ENCODE measurements at regions of chr6 and their contacts with region 1.

Region 1: GRCh38 chr6:33579828-33580714 is at the start of gene BAK1:
- DNase-seq: peak; percentile 91
- H3K4me3 ChIP-seq: peak within 1 kb of the TSS; percentile 78 to 93 (median 83)
- H3K27ac ChIP-seq: peak within 1 kb of the TSS; percentile 70
- H3K4me1 ChIP-seq: peaks cover 17% of the 10 kb centered on the region
- H3K27me3 ChIP-seq: no peaks in the 10 kb centered on the region
- CTCF ChIP-seq: peak; percentile 28 to 63
- POLR2A ChIP-seq: peak; percentile 84
- total RNA-seq, gene BAK1: 25.4 and 27.5 TPM in 2 replicates

Region 2: DNA sequence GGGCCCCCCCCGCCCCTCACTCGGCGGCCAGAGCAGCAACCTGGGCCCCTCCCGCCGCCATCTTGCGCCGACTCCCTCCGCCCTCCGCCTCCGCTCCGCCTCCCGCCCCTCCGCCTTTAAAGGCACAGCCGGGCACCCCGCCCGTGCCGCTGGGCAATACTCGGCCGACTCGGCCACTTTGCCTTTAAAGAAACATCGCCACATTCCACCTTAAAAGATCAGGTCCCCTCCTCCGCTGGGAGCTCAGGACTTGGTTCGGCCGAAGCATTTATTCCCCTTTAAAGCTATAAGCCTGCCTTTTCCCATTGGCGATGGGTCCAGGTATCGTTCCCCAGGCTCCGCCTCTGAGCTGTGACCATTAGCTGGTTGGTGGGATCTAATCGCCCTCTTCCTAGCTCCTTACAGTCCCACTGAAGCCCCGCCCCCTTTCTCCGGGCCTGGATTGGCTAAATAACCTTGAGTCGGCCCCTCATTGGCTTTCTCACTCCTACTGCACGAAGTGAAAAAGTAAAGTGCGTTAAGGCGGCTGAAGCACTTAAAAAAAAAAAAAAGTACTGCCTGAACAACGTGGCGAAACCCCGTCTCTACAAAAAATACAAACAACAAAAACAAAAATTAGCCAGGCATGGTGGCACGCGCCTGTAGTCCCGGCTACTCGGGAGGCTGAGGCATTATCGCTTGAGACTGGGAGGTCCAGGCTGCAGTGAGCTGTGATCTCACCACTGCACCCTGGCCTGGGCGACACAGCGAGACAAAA is 262.2 kb before region 1 on chr6 and contains the start of gene ZBTB22:
- CTCF ChIA-PET with region 1: no interaction called
- POLR2A ChIA-PET with region 1: no interaction called
- dilution Hi-C with region 1: no loop called
- intact Hi-C with region 1: loop called (anchors 10 kb)
- DNase-seq: peak; percentile 99
- H3K4me3 ChIP-seq: peak within 1 kb of the TSS; percentile 60 to 87 (median 87)
- H3K27ac ChIP-seq: peak within 1 kb of the TSS; percentile 71
- H3K4me1 ChIP-seq: peaks cover 55% of the 10 kb centered on the region
- H3K27me3 ChIP-seq: no peaks in the 10 kb centered on the region
- CTCF ChIP-seq: no peak
- POLR2A ChIP-seq: no peak
- total RNA-seq, gene ZBTB22: 12.6 and 13.9 TPM in 2 replicates

Region 3: DNA sequence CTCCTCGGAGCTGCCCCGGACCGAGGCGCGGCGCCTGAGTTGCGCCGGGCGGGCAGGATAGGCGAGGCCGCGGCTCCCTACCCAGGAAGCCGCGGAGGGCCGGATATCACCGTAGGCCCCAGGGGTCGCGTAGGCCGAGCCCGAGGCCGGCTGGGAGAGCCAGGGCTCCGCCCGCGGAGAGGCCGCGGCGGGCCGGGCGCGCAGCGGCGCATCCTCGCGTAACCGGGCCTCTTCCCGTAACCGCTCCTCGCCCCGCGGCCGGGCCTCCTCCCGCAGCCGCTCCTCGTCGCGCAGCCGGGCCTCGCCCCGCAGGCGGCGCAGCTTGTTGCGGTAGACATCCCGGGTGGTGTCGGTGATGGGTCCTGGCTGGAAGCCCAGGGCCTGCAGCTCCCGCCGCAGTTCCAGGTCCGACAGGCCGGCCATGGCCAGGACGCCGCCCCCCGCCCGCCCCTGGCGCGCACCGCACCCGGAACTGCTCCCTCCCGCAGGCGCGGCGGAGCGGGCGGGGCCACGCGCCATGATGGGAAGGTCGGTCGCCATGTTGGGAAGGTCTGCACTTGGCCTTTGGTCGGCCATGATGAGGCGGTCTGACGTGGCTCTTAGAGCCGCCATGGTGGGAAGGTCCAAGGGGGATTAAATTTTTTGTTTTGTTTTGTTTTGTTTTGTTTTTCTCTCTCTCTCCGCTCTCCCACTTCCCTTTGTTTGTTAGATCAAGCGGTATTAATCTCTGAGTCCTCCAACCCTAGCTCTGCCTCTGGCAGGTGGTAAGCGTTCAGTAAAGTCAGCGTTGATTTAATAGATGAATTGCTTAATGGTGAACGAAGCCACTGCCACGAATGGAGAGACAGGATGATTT is 208.9 kb after region 1 on chr6 and contains the start of gene LEMD2:
- CTCF ChIA-PET with region 1: no interaction called
- POLR2A ChIA-PET with region 1: no interaction called
- dilution Hi-C with region 1: no loop called
- intact Hi-C with region 1: no loop called
- DNase-seq: peak; percentile 94
- H3K4me3 ChIP-seq: peak within 1 kb of the TSS; percentile 48 to 83 (median 76)
- H3K27ac ChIP-seq: peak within 1 kb of the TSS; percentile 94
- H3K4me1 ChIP-seq: peaks cover 41% of the 10 kb centered on the region
- H3K27me3 ChIP-seq: peaks cover 0 to 2% of the 10 kb centered on the region in 2 experiments
- CTCF ChIP-seq: no peak
- POLR2A ChIP-seq: peak; percentile 94
- total RNA-seq, gene LEMD2: 81.8 and 84.3 TPM in 2 replicates